Activated CD4-positive, alpha-beta T cell treated with anti-CD3 and anti-CD28 coated beads for 36 hours (primary cell): ENCODE measurements at regions of chr19 and their contacts with region 1.

Region 1: GRCh38 chr19:47157431-47158321 is 27.0 kb downstream of the SAE1 start:
- DNase-seq: peak; percentile 54
- ATAC-seq: no peak
- H3K4me3 Mint-ChIP-seq: peak overlapping the region; percentile 58
- H3K27ac Mint-ChIP-seq: peak overlapping the region; percentile 93
- H3K4me1 Mint-ChIP-seq: peaks cover 75% of the 10 kb centered on the region
- H3K27me3 Mint-ChIP-seq: no peaks in the 10 kb centered on the region

Region 2: DNA sequence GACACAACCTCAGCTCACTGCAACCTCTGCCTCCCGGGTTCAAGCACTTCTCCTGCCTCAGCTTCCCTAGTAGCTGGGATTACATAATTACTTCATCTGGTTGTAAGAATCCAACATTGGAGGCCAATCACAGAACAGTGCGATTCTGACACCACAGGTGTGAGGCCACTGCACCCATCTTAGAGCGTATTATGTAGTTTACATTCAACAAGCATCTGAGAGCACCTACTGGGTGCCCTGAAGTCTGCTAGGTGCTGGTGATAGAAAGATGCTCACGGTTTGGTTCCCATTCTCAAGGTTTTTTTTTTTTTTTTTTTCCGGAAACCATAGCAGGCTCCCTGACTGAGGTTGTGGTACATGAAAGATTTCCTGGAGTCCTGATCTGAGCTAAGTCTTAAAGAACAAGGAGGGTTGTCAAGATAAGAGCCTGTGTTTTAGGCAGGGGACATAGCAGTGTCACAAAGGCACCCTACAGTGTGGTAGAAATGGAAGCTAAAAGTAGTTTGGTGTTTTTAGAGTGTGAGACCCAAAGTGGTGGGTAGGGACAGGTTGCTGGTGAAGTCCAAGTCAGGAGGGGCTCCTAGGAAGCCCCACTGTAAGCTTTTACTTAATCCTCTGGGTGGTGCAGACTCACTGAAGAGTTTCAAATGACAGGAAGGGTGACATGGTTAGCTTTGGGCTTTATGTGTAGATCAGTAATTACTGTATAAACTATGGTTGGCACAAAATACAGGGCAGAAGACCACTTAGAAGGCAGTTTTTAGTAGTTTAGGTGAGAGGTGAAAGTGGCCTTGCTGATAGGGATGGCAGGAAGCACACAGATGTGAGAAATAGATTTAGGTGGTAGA is 11.8 kb before region 1 on chr19:
- CTCF ChIA-PET with region 1: interaction called, 21 read pairs
- POLR2A ChIA-PET with region 1: interaction called, 10 read pairs
- intact Hi-C with region 1: no loop called
- DNase-seq: no peak
- ATAC-seq: peak; percentile 24
- H3K4me3 Mint-ChIP-seq: no peak overlapping the region
- H3K27ac Mint-ChIP-seq: peak overlapping the region; percentile 89
- H3K4me1 Mint-ChIP-seq: peaks cover 83% of the 10 kb centered on the region
- H3K27me3 Mint-ChIP-seq: no peaks in the 10 kb centered on the region

Region 3: DNA sequence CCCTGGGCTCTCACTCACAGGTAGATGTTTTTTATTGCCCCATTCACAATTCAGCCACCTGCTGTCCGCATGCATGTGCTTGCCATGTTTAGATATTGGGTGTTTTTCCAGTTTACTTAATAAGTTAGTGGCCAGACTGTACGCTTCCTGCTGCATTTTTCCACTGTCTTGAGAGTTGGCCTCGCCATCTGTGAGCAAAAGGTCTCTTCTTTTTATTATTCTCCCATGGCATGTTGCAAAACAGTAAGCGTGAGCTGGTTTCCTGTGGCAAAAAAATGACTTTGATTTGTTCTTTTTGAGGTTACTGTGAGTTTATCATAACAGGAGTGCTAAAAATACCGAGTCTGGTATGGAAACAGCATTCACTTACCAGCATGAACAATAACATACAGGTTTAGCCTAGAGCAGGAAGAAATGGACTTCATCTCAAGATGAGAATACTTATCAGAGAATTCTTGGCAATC is 19.0 kb after region 1 on chr19:
- CTCF ChIA-PET with region 1: interaction called, 10 read pairs
- POLR2A ChIA-PET with region 1: interaction called, 7 read pairs
- intact Hi-C with region 1: loop called (anchors 1 kb)
- DNase-seq: peak; percentile 63
- ATAC-seq: peak; percentile 86
- H3K4me3 Mint-ChIP-seq: peak overlapping the region; percentile 18
- H3K27ac Mint-ChIP-seq: peak overlapping the region; percentile 94
- H3K4me1 Mint-ChIP-seq: peaks cover 69% of the 10 kb centered on the region
- H3K27me3 Mint-ChIP-seq: no peaks in the 10 kb centered on the region

Region 4: DNA sequence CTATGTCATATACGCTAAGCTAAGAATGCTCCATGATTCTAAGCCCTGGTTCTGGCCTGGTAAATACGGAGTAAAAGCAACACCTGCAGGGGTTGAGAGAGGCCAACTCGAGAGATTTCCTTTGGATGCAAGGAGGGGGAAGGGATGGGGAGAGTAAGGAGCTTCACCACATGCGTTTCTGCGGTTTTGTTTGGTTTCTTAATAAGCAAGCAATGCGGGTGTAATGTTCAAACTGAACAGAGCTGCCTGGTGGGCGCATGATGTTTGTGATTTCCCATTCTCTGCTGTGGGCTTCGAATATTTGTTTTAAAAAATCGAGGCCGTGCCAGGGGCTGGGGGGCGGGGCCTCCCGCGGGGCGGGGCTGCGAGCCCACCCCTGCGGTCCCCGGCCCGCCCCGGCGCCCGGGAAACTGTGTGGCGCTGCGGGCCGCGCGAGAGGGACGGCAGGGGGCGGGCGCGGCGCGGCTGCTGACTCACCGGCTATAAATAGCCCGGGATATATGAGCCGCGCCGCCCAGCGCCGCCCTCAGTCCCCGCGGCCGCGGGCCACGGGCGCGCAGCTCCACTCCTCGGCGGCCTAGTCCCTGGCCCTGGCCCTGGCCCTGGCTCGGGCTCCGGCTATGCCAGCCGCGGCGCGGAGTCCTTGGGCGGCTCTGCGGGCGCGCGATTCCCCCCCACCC is 68.2 kb after region 1 on chr19:
- CTCF ChIA-PET with region 1: interaction called, 12 read pairs
- POLR2A ChIA-PET with region 1: interaction called, 5 read pairs
- intact Hi-C with region 1: loop called in 1 of 2 experiments (anchors 5 kb)
- DNase-seq: peak; percentile 93
- ATAC-seq: peak; percentile 70
- H3K4me3 Mint-ChIP-seq: peak overlapping the region; percentile 77
- H3K27ac Mint-ChIP-seq: no peak overlapping the region
- H3K4me1 Mint-ChIP-seq: peaks cover 16% of the 10 kb centered on the region
- H3K27me3 Mint-ChIP-seq: no peaks in the 10 kb centered on the region